Activated CD4-positive, alpha-beta T cell treated with anti-CD3 and anti-CD28 coated beads for 36 hours (primary cell): ENCODE measurements at regions of chr14 and their contacts with region 1.

Region 1: GRCh38 chr14:58722441-58722840 is 84.7 kb downstream of the DACT1 start:
- DNase-seq: no peak
- ATAC-seq: no peak
- H3K4me3 Mint-ChIP-seq: no peak overlapping the region
- H3K27ac Mint-ChIP-seq: no peak overlapping the region
- H3K4me1 Mint-ChIP-seq: no peaks in the 10 kb centered on the region
- H3K27me3 Mint-ChIP-seq: peaks cover 11% of the 10 kb centered on the region

Region 2: GRCh38 chr14:56794557-56795283 is 1927.7 kb before region 1 on chr14:
- CTCF ChIA-PET with region 1: no interaction called
- POLR2A ChIA-PET with region 1: no interaction called
- intact Hi-C with region 1: no loop called
- DNase-seq: no peak
- ATAC-seq: no peak
- H3K4me3 Mint-ChIP-seq: no peak overlapping the region
- H3K27ac Mint-ChIP-seq: no peak overlapping the region
- H3K4me1 Mint-ChIP-seq: peaks cover 8% of the 10 kb centered on the region
- H3K27me3 Mint-ChIP-seq: peaks cover 65% of the 10 kb centered on the region

Region 3: DNA sequence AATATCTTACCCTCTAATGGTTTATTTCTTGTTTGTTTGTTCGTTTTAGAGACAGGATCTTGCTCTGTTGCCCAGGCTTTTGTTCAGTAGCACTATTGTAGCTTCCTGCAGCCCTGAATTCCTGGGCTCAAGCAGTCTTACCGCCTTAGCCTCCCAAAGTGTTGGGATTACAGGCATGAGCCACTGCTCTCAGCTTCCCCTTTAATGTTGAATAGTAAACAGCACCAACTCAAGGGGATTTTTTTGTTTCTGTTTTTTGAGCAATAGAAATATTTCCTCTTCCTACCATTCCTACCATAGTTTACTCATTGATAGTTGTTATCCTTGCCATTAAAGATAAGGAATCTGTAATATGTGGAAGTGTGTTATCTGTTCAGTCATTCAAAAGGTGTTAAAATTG is 413.4 kb before region 1 on chr14:
- CTCF ChIA-PET with region 1: no interaction called
- POLR2A ChIA-PET with region 1: no interaction called
- intact Hi-C with region 1: no loop called
- DNase-seq: no peak
- ATAC-seq: no peak
- H3K4me3 Mint-ChIP-seq: no peak overlapping the region
- H3K27ac Mint-ChIP-seq: no peak overlapping the region
- H3K4me1 Mint-ChIP-seq: peaks cover 9% of the 10 kb centered on the region
- H3K27me3 Mint-ChIP-seq: no peaks in the 10 kb centered on the region

Region 4: DNA sequence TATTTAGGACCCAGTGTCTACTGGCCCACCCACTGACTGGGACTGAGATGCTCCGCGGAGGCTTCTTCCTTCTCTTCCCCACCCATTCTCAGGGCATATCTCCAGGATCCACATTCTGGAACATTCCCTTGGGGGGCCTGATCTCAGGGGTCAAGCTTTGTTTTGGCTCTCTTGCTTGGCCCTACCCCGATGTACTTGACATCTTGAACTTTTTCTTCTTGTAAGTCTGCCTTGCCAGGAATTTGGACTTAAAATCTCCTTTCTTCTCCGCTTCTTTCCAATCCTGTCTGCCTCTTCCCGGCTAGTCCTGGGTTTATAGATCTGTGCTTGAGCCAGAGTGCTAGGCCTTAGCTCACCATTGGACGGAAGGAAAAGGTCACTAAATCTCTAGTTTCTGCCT is 62.6 kb before region 1 on chr14:
- CTCF ChIA-PET with region 1: no interaction called
- POLR2A ChIA-PET with region 1: no interaction called
- intact Hi-C with region 1: loop called in 1 of 2 experiments (anchors 10 kb)
- DNase-seq: no peak
- ATAC-seq: no peak
- H3K4me3 Mint-ChIP-seq: no peak overlapping the region
- H3K27ac Mint-ChIP-seq: no peak overlapping the region
- H3K4me1 Mint-ChIP-seq: peaks cover 14% of the 10 kb centered on the region
- H3K27me3 Mint-ChIP-seq: no peaks in the 10 kb centered on the region

Region 5: DNA sequence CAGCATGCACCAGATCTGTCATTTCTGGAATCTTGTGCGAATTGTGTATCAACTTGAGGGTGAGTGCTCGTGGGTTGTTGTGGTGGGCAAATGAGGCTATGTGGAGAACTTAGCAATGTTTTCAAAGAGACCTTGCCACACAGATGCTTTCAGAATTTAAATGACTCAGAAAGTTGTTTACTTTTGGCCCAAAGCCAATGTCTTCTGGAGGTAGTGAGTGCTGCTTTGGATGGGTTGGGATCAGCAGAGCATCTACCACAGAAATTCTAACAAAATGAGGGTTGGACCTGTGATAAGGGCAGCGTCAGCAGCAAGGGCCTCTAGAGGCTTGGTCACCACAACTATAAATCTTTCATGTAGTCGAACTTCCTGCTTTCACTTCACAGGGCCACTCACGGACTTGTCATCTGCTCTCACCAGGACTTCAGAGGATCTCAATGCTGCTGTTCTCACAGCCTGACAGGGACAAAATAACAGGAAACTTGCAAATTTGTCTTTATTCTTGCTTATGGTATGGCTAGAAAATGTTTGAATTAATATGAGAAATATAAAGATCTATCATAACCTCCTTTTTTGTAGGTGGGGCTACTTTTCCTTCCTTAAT is 26.7 kb after region 1 on chr14:
- CTCF ChIA-PET with region 1: no interaction called
- POLR2A ChIA-PET with region 1: no interaction called
- intact Hi-C with region 1: no loop called
- DNase-seq: peak; percentile 67
- ATAC-seq: peak; percentile 80
- H3K4me3 Mint-ChIP-seq: no peak overlapping the region
- H3K27ac Mint-ChIP-seq: no peak overlapping the region
- H3K4me1 Mint-ChIP-seq: peaks cover 9% of the 10 kb centered on the region
- H3K27me3 Mint-ChIP-seq: no peaks in the 10 kb centered on the region

Region 6: DNA sequence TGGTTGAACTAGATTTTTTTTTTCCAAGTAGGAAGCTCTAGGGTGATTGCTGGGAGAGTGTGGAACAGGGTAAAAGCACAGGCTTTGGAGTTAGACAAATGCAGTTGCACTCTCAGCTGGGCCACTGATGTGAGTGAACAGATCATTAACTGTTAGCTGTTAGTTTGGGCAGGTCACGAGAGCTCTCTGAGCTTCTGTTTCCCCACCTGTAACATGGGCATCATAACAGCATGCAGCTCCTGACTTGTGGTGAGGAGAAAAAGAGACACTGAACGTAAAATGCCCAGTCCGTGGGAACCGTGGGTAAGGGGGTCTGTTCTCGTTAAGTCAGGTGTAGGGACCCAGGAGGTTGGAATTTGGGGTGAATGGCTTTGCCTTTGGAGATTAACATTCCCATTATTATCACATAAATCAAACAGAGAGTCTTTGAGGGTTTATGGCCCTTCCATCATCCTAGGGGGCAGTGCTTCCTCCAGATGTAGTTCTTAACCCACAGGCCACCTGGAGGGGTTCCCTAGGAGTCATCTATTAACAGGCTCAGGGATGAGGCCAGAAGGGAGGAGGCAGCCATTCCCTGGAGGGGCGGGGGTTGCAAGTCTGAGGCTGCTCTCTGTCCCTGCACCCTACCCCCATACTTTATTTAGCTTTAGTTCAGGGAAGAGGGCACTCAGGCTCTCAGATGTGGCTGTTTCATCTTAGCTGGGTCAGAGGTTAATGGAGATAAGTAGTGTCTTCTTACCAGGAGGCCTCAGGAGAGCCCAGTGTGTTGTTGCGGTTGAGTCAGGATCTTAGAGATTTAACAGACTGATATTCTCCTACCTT is 50.6 kb after region 1 on chr14:
- CTCF ChIA-PET with region 1: no interaction called
- POLR2A ChIA-PET with region 1: no interaction called
- intact Hi-C with region 1: no loop called
- DNase-seq: no peak
- ATAC-seq: no peak
- H3K4me3 Mint-ChIP-seq: no peak overlapping the region
- H3K27ac Mint-ChIP-seq: no peak overlapping the region
- H3K4me1 Mint-ChIP-seq: no peaks in the 10 kb centered on the region
- H3K27me3 Mint-ChIP-seq: no peaks in the 10 kb centered on the region